Heart right ventricle (tissue), 16 donors: ENCODE measurements at regions of chr10 and their contacts with region 1.

Region 1: GRCh38 chr10:69914398-69915214 is 112.9 kb downstream of the COL13A1 start:
- DNase-seq: peak; percentile 70 to 71
- ATAC-seq: peak; percentile 50 to 80 (median 76)
- H3K4me3 ChIP-seq: no peak overlapping the region
- H3K27ac ChIP-seq: no peak overlapping the region
- H3K4me1 ChIP-seq: peaks cover 0 to 33% (median 19%) of the 10 kb centered on the region in 9 donors
- H3K27me3 ChIP-seq: peaks cover 0 to 6% (median 0%) of the 10 kb centered on the region in 7 donors
- CTCF ChIP-seq: peak; percentile 80 to 95 (median 94)

Region 2: GRCh38 chr10:69639291-69640195 is 275.1 kb before region 1 on chr10:
- intact Hi-C with region 1: loop called in 8 of 10 experiments (anchors 2 to 5 kb)
- DNase-seq: peak; percentile 36 to 64
- ATAC-seq: peak in 6 of 8 donors; percentile 32 to 75 (median 60)
- H3K4me3 ChIP-seq: no peak overlapping the region
- H3K27ac ChIP-seq: no peak overlapping the region
- H3K4me1 ChIP-seq: no peaks in the 10 kb centered on the region
- H3K27me3 ChIP-seq: peaks cover 0 to 37% (median 12%) of the 10 kb centered on the region in 7 donors
- CTCF ChIP-seq: peak; percentile 75 to 90 (median 87)

Region 3: GRCh38 chr10:69696073-69696731 is 218.4 kb before region 1 on chr10:
- intact Hi-C with region 1: loop called in 7 of 10 experiments (anchors 1 to 10 kb)
- DNase-seq: peak in 1 of 2 donors; percentile 12
- ATAC-seq: peak in 6 of 8 donors; percentile 42 to 72 (median 60)
- H3K4me3 ChIP-seq: no peak overlapping the region
- H3K27ac ChIP-seq: no peak overlapping the region
- H3K4me1 ChIP-seq: peaks cover 0 to 5% (median 0%) of the 10 kb centered on the region in 9 donors
- H3K27me3 ChIP-seq: peaks cover 0 to 10% (median 3%) of the 10 kb centered on the region in 7 donors
- CTCF ChIP-seq: peak; percentile 21 to 73 (median 61)

Region 4: GRCh38 chr10:69786791-69787190 is 127.8 kb before region 1 on chr10:
- intact Hi-C with region 1: loop called in 2 of 10 experiments (anchors 5 kb)
- DNase-seq: no peak
- ATAC-seq: no peak
- H3K4me3 ChIP-seq: no peak overlapping the region
- H3K27ac ChIP-seq: no peak overlapping the region
- H3K4me1 ChIP-seq: no peaks in the 10 kb centered on the region
- H3K27me3 ChIP-seq: peaks cover 0 to 30% (median 23%) of the 10 kb centered on the region in 7 donors
- CTCF ChIP-seq: peak in 5 of 9 donors; percentile 11 to 42 (median 22)

Region 5: GRCh38 chr10:69939061-69939460 is 24.5 kb after region 1 on chr10:
- intact Hi-C with region 1: loop called in 1 of 10 experiments (anchors 1 kb)
- DNase-seq: no peak
- ATAC-seq: peak in 2 of 8 donors; percentile 37 to 50
- H3K4me3 ChIP-seq: no peak overlapping the region
- H3K27ac ChIP-seq: no peak overlapping the region
- H3K4me1 ChIP-seq: peaks cover 0 to 21% (median 3%) of the 10 kb centered on the region in 9 donors
- H3K27me3 ChIP-seq: no peaks in the 10 kb centered on the region
- CTCF ChIP-seq: no peak